ENCODE measurements at regions of chr12 and their contacts with region 1.

Region 1: DNA sequence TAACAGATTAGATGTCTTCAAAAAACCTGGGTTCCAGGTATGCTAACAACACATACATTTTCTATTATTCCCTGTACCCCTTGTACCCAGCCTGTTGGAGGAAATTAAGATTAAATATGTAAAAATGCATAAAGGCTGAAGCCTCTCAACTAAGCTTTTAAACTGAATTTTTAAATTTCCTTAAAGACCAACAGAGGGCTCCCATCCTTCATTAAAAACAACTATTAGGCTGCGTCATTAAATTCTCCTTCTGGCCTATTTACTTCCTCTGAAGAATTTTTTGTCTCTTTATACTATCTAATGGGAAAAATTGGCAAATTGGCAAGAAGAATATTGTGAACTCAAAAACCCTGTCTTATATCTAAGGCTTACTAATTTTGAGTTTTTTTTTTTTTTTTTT is 21.8 kb downstream of the SENP1 start:
- DNase-seq: no peak
- ATAC-seq: peak; percentile 39 to 56
- H3K4me3 ChIP-seq: no peak overlapping the region
- H3K27ac ChIP-seq: no peak overlapping the region
- H3K4me1 ChIP-seq: no peaks in the 10 kb centered on the region
- H3K27me3 ChIP-seq: no peaks in the 10 kb centered on the region
- CTCF ChIP-seq: peak; percentile 29 to 65 (median 42)
- POLR2A ChIP-seq: no peak

Region 2: DNA sequence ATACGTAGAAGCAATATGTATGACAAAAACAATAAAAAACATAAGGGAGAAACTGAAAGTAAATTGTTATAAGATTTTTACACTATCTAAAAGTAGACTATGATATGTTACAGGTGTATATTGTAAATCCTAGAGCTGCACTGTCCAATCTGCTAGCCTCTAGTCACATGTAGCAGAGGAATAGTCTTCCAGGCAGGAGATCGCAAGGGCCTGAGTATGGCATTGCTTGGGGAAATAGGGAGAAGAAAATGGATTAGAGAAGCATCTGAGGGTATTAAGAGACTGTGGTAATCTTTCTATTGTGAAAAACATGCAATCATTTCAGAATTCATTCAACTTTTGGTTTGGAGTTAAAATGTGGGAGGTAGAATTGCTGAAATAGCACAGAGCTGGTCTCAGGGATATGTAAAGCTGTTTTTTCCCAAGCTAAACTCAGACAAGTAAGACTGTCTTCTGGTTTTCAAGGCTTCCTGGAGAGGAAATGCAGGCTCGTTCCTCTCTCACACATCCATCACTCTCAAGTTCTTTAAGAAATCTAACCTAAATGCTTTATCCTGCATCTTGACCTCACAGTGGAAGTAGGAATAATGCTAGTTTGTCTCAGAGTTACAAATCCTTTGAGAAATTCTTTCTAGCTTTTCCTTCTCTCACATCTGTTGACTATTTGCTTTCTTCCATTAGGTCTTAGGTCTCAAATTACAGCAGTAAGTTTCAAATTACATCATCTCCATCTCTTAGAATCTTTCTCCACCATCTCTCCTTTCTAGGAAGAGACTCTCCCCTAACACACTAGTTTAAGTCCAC is 91.7 kb after region 1 on chr12:
- in situ Hi-C with region 1: loop called in 1 of 4 experiments (anchors 10 kb)
- intact Hi-C with region 1: no loop called
- DNase-seq: no peak
- ATAC-seq: no peak
- H3K4me3 ChIP-seq: no peak overlapping the region
- H3K27ac ChIP-seq: peak overlapping the region in 1 of 4 donors; percentile 0
- H3K4me1 ChIP-seq: no peaks in the 10 kb centered on the region
- H3K27me3 ChIP-seq: peaks cover 6 to 15% (median 8%) of the 10 kb centered on the region in 3 donors
- CTCF ChIP-seq: no peak
- POLR2A ChIP-seq: no peak

Region 3: GRCh38 chr12:48189331-48190125 is 105.5 kb after region 1 on chr12:
- in situ Hi-C with region 1: no loop called
- intact Hi-C with region 1: loop called (anchors 5 kb)
- DNase-seq: peak in 1 of 2 donors; percentile 54
- ATAC-seq: peak; percentile 64 to 82
- H3K4me3 ChIP-seq: no peak overlapping the region
- H3K27ac ChIP-seq: no peak overlapping the region
- H3K4me1 ChIP-seq: no peaks in the 10 kb centered on the region
- H3K27me3 ChIP-seq: peaks cover under 1 to 13% (median 12%) of the 10 kb centered on the region in 3 donors
- CTCF ChIP-seq: peak; percentile 70 to 88 (median 79)
- POLR2A ChIP-seq: no peak

Region 4: DNA sequence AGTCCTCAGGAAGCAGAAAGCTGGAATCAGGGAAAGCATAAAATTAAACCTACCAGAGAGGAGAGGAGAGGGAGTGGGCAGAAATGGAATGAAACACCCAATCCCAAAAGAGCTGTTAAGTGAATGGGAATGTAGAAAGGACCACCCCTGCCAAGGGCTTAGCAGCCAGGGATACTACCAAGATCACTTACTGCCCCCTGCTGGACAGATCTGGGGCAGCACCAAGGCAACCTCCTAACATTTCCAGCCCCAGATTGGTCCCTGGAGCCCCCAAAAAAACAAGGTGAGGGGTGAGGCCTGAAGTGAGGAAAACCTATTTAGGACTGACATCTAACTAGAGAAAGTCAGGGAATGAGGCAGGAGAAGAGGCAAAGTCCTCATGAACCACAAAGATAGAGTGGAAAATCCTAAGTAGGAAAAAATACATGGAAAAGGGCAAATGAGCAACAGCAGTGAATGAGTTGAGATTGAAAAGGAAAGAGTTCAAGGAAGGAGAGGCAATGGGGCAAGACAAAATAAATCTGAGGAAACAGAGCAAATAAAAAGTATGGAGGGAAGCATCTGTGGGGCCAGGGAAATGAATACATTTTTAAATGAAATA is 852.4 kb after region 1 on chr12:
- in situ Hi-C with region 1: no loop called
- intact Hi-C with region 1: no loop called
- DNase-seq: peak in 1 of 2 donors; percentile 48
- ATAC-seq: peak in 1 of 2 donors; percentile 64
- H3K4me3 ChIP-seq: no peak overlapping the region
- H3K27ac ChIP-seq: no peak overlapping the region
- H3K4me1 ChIP-seq: no peaks in the 10 kb centered on the region
- H3K27me3 ChIP-seq: no peaks in the 10 kb centered on the region
- CTCF ChIP-seq: peak; percentile 63 to 88 (median 76)
- POLR2A ChIP-seq: no peak